ENCODE measurements at regions of chr14 and their contacts with region 1.

Region 1: GRCh38 chr14:91286530-91286937 is 42.0 kb upstream of the GPR68 start:
- DNase-seq: peak; percentile 62 to 91 (median 77)
- ATAC-seq: peak; percentile 87
- H3K4me3 ChIP-seq: no peak overlapping the region
- H3K4me3 Mint-ChIP-seq: no peak overlapping the region
- H3K27ac ChIP-seq: no peak overlapping the region
- H3K27ac Mint-ChIP-seq: peak overlapping the region; percentile 77
- H3K4me1 ChIP-seq: peaks cover 9% of the 10 kb centered on the region
- H3K4me1 Mint-ChIP-seq: peaks cover 7% of the 10 kb centered on the region
- H3K27me3 ChIP-seq: no peaks in the 10 kb centered on the region
- H3K27me3 Mint-ChIP-seq: no peaks in the 10 kb centered on the region
- CTCF ChIP-seq: peak; percentile 87

Region 2: DNA sequence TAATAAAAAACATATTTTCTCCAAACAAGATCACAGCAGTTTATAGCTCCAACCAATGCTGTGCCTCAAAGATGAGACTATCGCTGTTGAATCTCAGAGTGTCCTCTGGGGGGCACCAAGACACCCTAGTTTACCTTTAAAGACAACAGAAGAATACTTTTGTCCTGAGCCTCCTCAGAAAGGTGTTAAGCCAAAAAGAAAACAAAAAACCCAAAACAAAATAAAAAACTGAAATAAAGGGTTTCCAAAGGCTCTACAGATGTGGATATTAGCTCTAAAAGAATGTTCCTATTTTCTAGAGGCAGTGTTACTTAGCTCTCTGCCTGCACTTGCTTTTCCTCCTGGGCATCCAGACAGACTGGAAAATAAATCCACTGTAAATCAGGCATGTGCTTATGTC is 383.4 kb before region 1 on chr14:
- CTCF ChIA-PET with region 1: interaction called, 4 read pairs
- POLR2A ChIA-PET with region 1: no interaction called
- intact Hi-C with region 1: loop called (anchors 1 to 2 kb)
- DNase-seq: peak; percentile 33 to 78 (median 47)
- ATAC-seq: peak; percentile 94
- H3K4me3 ChIP-seq: no peak overlapping the region
- H3K4me3 Mint-ChIP-seq: no peak overlapping the region
- H3K27ac ChIP-seq: no peak overlapping the region
- H3K27ac Mint-ChIP-seq: no peak overlapping the region
- H3K4me1 ChIP-seq: no peaks in the 10 kb centered on the region
- H3K4me1 Mint-ChIP-seq: no peaks in the 10 kb centered on the region
- H3K27me3 ChIP-seq: no peaks in the 10 kb centered on the region
- H3K27me3 Mint-ChIP-seq: no peaks in the 10 kb centered on the region
- CTCF ChIP-seq: peak; percentile 86

Region 3: DNA sequence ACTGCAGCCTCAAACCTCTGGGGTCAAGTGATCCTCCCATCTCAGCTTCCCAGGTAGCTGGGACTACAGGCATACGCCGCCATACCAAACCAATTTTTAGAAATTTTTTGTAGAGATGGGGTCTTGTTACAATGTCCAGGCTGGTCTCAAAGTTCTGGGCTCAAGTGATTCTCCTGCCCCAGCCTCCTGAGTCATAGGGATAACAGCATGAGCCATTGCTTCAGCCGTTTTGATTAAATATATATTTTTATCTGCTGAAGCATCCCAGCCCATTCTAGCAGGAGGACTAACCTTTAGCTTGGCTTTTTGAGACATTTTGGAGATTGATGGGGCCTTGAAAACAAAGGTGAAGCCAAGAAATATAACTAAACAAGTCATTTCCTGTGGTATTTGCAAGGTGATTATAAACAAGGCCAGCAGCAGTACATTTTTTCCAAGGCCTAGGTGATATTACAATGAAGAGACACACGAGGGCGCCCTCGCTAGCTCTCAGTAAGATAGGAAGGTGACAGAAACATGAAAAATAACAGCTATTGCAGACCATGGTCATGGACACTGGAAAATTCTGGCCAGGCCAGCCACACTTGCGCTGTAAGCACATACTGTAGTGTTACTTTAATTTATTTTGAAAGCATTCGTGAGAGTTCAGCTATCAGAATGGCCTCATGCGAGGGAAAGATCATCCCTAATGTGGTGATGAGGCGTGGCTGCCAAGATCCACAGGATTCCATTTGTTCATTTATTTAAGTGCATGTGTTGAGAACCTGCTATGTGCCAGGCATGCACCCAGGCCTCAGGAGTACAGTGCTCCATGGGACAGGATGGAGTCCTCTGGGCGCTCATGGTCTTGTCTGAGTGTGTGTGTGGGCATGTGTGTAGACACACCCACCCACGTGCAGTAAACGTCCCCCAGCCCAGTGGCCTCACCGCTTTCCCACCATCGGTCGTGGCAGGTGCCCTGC is 109.2 kb before region 1 on chr14:
- CTCF ChIA-PET with region 1: interaction called, 57 read pairs
- POLR2A ChIA-PET with region 1: interaction called, 10 read pairs
- intact Hi-C with region 1: loop called (anchors 1 kb)
- DNase-seq: peak; percentile 47 to 89 (median 58)
- ATAC-seq: peak; percentile 93
- H3K4me3 ChIP-seq: no peak overlapping the region
- H3K4me3 Mint-ChIP-seq: no peak overlapping the region
- H3K27ac ChIP-seq: peak overlapping the region in 1 of 2 donors; percentile 40
- H3K27ac Mint-ChIP-seq: peak overlapping the region; percentile 47
- H3K4me1 ChIP-seq: peaks cover 17% of the 10 kb centered on the region
- H3K4me1 Mint-ChIP-seq: peaks cover 17% of the 10 kb centered on the region
- H3K27me3 ChIP-seq: no peaks in the 10 kb centered on the region
- H3K27me3 Mint-ChIP-seq: no peaks in the 10 kb centered on the region
- CTCF ChIP-seq: peak; percentile 91

Region 4: GRCh38 chr14:91193069-91193468 is 93.5 kb before region 1 on chr14:
- CTCF ChIA-PET with region 1: no interaction called
- POLR2A ChIA-PET with region 1: no interaction called
- intact Hi-C with region 1: loop called in 1 of 2 experiments (anchors 5 kb)
- DNase-seq: no peak
- ATAC-seq: no peak
- H3K4me3 ChIP-seq: no peak overlapping the region
- H3K4me3 Mint-ChIP-seq: no peak overlapping the region
- H3K27ac ChIP-seq: no peak overlapping the region
- H3K27ac Mint-ChIP-seq: no peak overlapping the region
- H3K4me1 ChIP-seq: peaks cover 15% of the 10 kb centered on the region
- H3K4me1 Mint-ChIP-seq: peaks cover 17% of the 10 kb centered on the region
- H3K27me3 ChIP-seq: no peaks in the 10 kb centered on the region
- H3K27me3 Mint-ChIP-seq: no peaks in the 10 kb centered on the region
- CTCF ChIP-seq: no peak

Region 5: GRCh38 chr14:91223028-91223783 is 63.3 kb before region 1 on chr14:
- CTCF ChIA-PET with region 1: interaction called, 4 read pairs
- POLR2A ChIA-PET with region 1: no interaction called
- intact Hi-C with region 1: loop called in 1 of 2 experiments (anchors 5 kb)
- DNase-seq: peak in 2 of 14 experiments; percentile 43 to 71
- ATAC-seq: peak; percentile 30
- H3K4me3 ChIP-seq: no peak overlapping the region
- H3K4me3 Mint-ChIP-seq: no peak overlapping the region
- H3K27ac ChIP-seq: no peak overlapping the region
- H3K27ac Mint-ChIP-seq: peak overlapping the region; percentile 46
- H3K4me1 ChIP-seq: peaks cover 60% of the 10 kb centered on the region
- H3K4me1 Mint-ChIP-seq: peaks cover 73% of the 10 kb centered on the region
- H3K27me3 ChIP-seq: no peaks in the 10 kb centered on the region
- H3K27me3 Mint-ChIP-seq: no peaks in the 10 kb centered on the region
- CTCF ChIP-seq: no peak

Region 6: GRCh38 chr14:91228112-91229004 is 58.2 kb before region 1 on chr14:
- CTCF ChIA-PET with region 1: interaction called, 4 read pairs
- POLR2A ChIA-PET with region 1: interaction called, 6 read pairs
- intact Hi-C with region 1: loop called (anchors 1 to 5 kb)
- DNase-seq: peak in 13 of 14 experiments; percentile 41 to 94 (median 60)
- ATAC-seq: peak; percentile 77
- H3K4me3 ChIP-seq: no peak overlapping the region
- H3K4me3 Mint-ChIP-seq: peak overlapping the region; percentile 13
- H3K27ac ChIP-seq: peak overlapping the region; percentile 58 to 76
- H3K27ac Mint-ChIP-seq: peak overlapping the region; percentile 88
- H3K4me1 ChIP-seq: peaks cover 96% of the 10 kb centered on the region
- H3K4me1 Mint-ChIP-seq: peaks cover 90% of the 10 kb centered on the region
- H3K27me3 ChIP-seq: no peaks in the 10 kb centered on the region
- H3K27me3 Mint-ChIP-seq: no peaks in the 10 kb centered on the region
- CTCF ChIP-seq: no peak

Region 7: GRCh38 chr14:91249841-91250616 is 36.5 kb before region 1 on chr14:
- CTCF ChIA-PET with region 1: interaction called, 3 read pairs
- POLR2A ChIA-PET with region 1: interaction called, 3 read pairs
- intact Hi-C with region 1: loop called in 1 of 2 experiments (anchors 5 kb)
- DNase-seq: peak in 7 of 14 experiments; percentile 27 to 81 (median 52)
- ATAC-seq: no peak
- H3K4me3 ChIP-seq: no peak overlapping the region
- H3K4me3 Mint-ChIP-seq: peak overlapping the region; percentile 79
- H3K27ac ChIP-seq: peak overlapping the region; percentile 59 to 68
- H3K27ac Mint-ChIP-seq: peak overlapping the region; percentile 78
- H3K4me1 ChIP-seq: peaks cover 96% of the 10 kb centered on the region
- H3K4me1 Mint-ChIP-seq: peaks cover 87% of the 10 kb centered on the region
- H3K27me3 ChIP-seq: no peaks in the 10 kb centered on the region
- H3K27me3 Mint-ChIP-seq: no peaks in the 10 kb centered on the region
- CTCF ChIP-seq: no peak

Region 8: DNA sequence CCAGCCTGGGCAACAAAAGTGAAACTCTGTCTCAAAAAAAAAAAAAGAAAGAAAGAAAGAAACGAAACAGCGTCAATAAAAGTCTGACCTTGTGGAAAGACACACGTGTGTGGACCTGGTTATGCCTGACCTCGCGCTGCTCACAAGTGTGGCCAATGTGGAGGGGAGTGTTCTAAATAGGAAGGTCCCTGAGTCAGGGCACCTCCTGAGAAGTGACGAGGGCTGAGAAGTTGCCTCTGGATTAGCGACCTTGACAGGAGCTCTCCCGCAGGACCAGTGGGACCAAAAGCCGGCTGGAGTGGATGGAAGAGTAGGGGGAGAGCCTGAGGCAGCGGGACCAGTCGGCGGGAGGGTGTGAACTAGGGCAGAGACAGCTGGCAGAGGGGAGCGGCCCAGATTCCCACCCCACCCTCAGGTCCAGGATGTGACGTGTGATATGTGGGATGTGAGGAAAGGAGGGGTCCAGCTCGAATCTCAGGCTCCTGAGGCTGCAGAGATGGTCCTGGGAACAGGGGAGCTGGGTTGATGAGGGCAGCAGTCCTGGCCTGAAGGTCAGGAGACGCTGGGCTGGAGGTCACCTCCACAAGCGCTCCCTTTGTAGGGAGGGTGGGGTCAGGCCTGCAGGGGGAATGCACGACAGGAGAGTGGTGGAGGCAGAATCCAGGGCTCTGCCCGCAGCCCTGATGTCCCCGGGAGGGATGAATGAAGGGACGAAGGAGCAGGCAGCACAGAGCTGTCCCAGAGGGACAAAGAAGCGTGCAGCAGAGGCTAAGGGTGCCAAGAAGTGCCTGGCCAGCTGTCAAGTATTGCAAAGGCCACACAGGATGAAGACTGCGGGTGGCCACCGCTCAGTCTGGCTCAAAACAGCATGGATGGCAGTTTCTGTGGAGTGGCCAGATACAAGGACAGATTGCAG is 17.2 kb before region 1 on chr14:
- CTCF ChIA-PET with region 1: no interaction called
- POLR2A ChIA-PET with region 1: no interaction called
- intact Hi-C with region 1: no loop called
- DNase-seq: peak in 1 of 14 experiments; percentile 11
- ATAC-seq: no peak
- H3K4me3 ChIP-seq: no peak overlapping the region
- H3K4me3 Mint-ChIP-seq: no peak overlapping the region
- H3K27ac ChIP-seq: peak overlapping the region in 1 of 2 donors; percentile 4
- H3K27ac Mint-ChIP-seq: peak overlapping the region; percentile 70
- H3K4me1 ChIP-seq: peaks cover 10% of the 10 kb centered on the region
- H3K4me1 Mint-ChIP-seq: peaks cover 26% of the 10 kb centered on the region
- H3K27me3 ChIP-seq: no peaks in the 10 kb centered on the region
- H3K27me3 Mint-ChIP-seq: no peaks in the 10 kb centered on the region
- CTCF ChIP-seq: no peak

Region 9: DNA sequence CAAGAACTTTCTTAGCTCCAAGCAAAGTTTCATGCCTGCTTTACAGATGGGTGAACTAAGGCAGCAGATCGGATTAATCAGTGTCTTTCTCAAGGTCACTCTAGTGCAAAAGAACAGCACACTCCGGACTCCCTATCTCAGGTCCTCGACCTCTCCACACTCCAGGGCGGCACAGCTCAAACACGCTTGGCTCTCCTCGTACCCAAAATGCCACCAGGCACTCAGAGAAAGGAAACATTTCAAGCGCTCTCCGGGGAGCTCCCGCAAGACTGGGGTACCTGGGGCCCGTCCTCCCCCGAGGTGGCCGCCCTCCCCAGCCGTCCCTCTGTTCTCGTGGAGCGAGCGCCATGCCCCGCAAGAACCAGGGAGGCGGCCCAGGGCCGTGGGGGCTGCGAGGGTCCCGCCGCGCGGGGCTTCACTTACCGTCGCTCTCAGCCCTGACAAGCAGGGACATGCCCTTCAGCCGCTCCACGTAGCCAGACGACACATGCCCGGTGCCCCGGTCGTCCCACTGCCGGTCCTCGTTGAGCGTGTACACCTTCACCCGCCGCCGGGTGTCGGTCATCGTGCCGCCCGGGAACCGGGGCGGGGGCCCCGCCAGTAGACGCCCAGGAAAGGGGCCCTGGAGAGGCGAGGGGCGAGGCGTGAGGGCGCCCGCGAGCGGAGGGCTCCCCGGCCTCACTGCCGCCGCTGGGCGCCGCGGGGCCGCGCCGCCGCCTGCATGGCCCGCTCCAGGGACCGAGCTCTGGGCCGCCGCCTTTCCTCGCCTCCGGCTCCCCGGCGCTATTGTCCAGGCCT is 222.7 kb after region 1 on chr14:
- CTCF ChIA-PET with region 1: no interaction called
- POLR2A ChIA-PET with region 1: no interaction called
- intact Hi-C with region 1: no loop called
- DNase-seq: peak in 12 of 14 experiments; percentile 13 to 51 (median 30)
- ATAC-seq: peak; percentile 1
- H3K4me3 ChIP-seq: peak overlapping the region; percentile 90
- H3K4me3 Mint-ChIP-seq: peak overlapping the region; percentile 100
- H3K27ac ChIP-seq: peak overlapping the region; percentile 65 to 99
- H3K27ac Mint-ChIP-seq: peak overlapping the region; percentile 100
- H3K4me1 ChIP-seq: peaks cover 33% of the 10 kb centered on the region
- H3K4me1 Mint-ChIP-seq: peaks cover 55% of the 10 kb centered on the region
- H3K27me3 ChIP-seq: no peaks in the 10 kb centered on the region
- H3K27me3 Mint-ChIP-seq: no peaks in the 10 kb centered on the region
- CTCF ChIP-seq: no peak